Activated CD4-positive, alpha-beta T cell treated with anti-CD3 and anti-CD28 coated beads, Interleukin-2, amount 10 ng/mL, durations not matched to agents 7 days and 5 days (primary cell): ENCODE measurements at regions of chr3 and their contacts with region 1.

Region 1: DNA sequence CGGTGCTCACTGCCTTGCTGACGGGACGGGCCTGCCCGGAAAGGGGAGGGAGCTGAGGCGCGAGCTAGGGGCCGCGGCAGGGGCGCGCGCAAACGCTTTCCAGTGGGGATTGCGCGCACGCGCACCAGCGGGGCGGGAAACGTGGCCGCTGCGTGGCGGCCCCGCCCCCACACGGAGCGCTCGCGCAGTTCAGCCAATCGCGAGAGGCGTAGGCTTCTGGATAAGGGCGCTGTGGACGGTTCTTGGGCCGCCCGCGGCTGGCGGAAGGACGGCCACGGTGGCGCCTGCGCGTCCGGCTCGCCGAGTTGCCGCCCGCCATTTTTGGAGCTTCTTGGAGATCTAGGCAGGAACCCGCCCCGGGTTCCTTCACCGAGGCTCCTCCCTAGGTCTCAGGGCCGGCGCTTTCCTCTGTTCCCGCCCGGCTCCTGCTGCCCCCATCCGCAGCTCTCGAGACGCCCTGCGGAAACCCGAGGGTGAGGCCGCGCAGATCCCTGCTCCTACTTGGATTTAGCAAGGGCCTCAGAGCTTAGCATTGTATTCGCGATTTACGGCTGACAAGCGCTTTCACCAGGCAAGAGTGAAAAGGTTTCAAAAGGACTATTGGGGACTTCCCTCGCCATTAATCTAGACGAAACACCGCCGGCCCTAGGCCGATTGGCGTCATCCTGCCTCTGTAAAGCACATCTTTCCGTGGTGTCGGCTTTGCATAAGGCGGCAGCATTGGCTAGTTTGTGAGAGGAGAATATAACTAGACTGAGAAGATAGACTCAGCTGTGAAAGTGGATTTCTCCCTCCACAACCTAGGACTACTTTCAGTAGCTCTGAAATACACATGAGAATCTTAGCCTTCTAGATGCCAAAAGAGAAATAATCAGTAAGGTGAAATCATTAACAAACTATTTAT is 496 bp upstream of the STAG1 start:
- DNase-seq: peak; percentile 98
- H3K4me3 Mint-ChIP-seq: peak overlapping the region; percentile 91
- H3K27ac Mint-ChIP-seq: peak overlapping the region; percentile 99
- H3K4me1 Mint-ChIP-seq: peaks cover 37% of the 10 kb centered on the region
- H3K27me3 Mint-ChIP-seq: no peaks in the 10 kb centered on the region

Region 2: GRCh38 chr3:136078421-136079364 is 674.0 kb before region 1 on chr3:
- CTCF ChIA-PET with region 1: interaction called, 14 read pairs
- POLR2A ChIA-PET with region 1: no interaction called
- DNase-seq: no peak
- H3K4me3 Mint-ChIP-seq: no peak overlapping the region
- H3K27ac Mint-ChIP-seq: no peak overlapping the region
- H3K4me1 Mint-ChIP-seq: no peaks in the 10 kb centered on the region
- H3K27me3 Mint-ChIP-seq: peaks cover 6% of the 10 kb centered on the region

Region 3: GRCh38 chr3:136250226-136250902 is 502.3 kb before region 1 on chr3 and contains the start of gene PCCB:
- CTCF ChIA-PET with region 1: interaction called, 12 read pairs
- POLR2A ChIA-PET with region 1: no interaction called
- DNase-seq: peak; percentile 93
- H3K4me3 Mint-ChIP-seq: peak within 1 kb of the TSS; percentile 88
- H3K27ac Mint-ChIP-seq: peak within 1 kb of the TSS; percentile 94
- H3K4me1 Mint-ChIP-seq: peaks cover 21% of the 10 kb centered on the region
- H3K27me3 Mint-ChIP-seq: no peaks in the 10 kb centered on the region
- total RNA-seq, gene PCCB: 17.3 to 19.9 TPM

Region 4: GRCh38 chr3:136741063-136741462 is 11.6 kb before region 1 on chr3:
- CTCF ChIA-PET with region 1: interaction called, 29 read pairs
- POLR2A ChIA-PET with region 1: no interaction called
- DNase-seq: no peak
- H3K4me3 Mint-ChIP-seq: no peak overlapping the region
- H3K27ac Mint-ChIP-seq: no peak overlapping the region
- H3K4me1 Mint-ChIP-seq: peaks cover 30% of the 10 kb centered on the region
- H3K27me3 Mint-ChIP-seq: no peaks in the 10 kb centered on the region

Region 5: DNA sequence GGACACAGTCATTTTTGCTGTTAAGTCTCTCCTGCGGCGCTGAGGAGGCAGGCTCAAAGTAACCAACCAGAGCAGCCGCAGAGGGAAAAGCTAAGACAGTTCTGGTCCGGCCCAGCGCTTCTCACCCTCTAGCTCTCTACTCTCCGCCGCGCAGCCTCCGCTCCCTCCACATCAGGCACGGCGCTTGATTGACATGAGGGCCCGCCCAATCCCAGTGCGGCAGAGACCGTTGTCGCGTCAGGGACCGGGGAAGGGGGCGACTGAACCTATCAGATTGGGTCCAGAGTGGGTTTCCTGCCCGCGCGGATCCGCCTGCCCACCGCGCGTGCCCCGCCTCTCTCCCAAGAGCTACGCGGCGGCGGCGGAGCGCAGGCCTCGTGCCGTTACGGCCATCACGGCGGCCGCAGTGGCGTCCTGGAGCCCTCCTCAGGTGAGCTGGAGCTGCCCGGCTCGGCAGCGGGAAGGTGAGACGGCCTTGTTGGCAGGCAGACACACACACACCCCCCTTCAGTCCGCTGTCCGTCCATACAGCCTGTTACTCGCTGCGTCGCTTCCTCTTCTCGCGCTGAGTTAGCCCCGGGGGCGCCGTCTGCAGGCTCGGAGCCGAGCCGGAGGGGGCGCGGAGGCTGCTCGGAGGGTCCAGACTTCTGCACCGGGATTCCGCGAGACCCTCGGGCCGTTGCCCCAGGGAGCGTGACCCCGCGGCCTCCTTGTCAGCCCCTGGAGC is 109.4 kb after region 1 on chr3 and contains the start of gene NCK1:
- CTCF ChIA-PET with region 1: interaction called, 11 read pairs
- POLR2A ChIA-PET with region 1: interaction called, 8 read pairs
- DNase-seq: peak; percentile 99
- H3K4me3 Mint-ChIP-seq: peak within 1 kb of the TSS; percentile 98
- H3K27ac Mint-ChIP-seq: peak within 1 kb of the TSS; percentile 99
- H3K4me1 Mint-ChIP-seq: peaks cover 51% of the 10 kb centered on the region
- H3K27me3 Mint-ChIP-seq: no peaks in the 10 kb centered on the region
- total RNA-seq, gene NCK1: 39.2 to 48.5 TPM